ENCODE measurements at regions of chr1 and their contacts with region 1.

Region 1: GRCh38 chr1:244788493-244789275 is 46.8 kb upstream of the COX20 start:
- DNase-seq: no peak
- H3K4me3 ChIP-seq: no peak overlapping the region
- H3K27ac ChIP-seq: no peak overlapping the region
- H3K4me1 ChIP-seq: no peaks in the 10 kb centered on the region
- H3K27me3 ChIP-seq: no peaks in the 10 kb centered on the region
- CTCF ChIP-seq: no peak
- EP300 ChIP-seq: no peak
- POLR2A ChIP-seq: no peak

Region 2: GRCh38 chr1:244552340-244552739 is 236.3 kb before region 1 on chr1:
- in situ Hi-C with region 1: no loop called
- intact Hi-C with region 1: no loop called
- DNase-seq: no peak
- H3K4me3 ChIP-seq: no peak overlapping the region
- H3K27ac ChIP-seq: no peak overlapping the region
- H3K4me1 ChIP-seq: no peaks in the 10 kb centered on the region
- H3K27me3 ChIP-seq: no peaks in the 10 kb centered on the region
- CTCF ChIP-seq: no peak
- EP300 ChIP-seq: no peak
- POLR2A ChIP-seq: no peak

Region 3: DNA sequence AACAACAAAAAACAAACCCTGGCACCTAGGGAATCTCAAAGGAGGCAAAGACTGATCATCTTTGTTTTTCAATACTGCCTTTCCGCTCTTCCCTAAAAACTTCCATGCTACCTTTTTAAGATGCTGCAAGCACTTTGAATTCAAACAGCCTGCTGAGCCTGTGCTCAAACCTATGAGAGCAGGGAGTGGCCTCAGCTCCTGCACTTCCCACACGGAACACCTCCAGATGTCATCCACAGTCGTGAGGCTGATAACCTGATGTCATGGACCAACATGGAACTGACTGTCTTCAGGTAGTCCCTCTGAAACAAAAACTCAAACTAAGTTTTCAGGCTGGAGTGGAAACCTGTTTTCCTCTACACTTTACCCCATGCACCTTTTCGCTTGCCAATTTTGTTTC is 88.9 kb before region 1 on chr1:
- in situ Hi-C with region 1: no loop called
- intact Hi-C with region 1: loop called (anchors 5 kb)
- DNase-seq: no peak
- H3K4me3 ChIP-seq: no peak overlapping the region
- H3K27ac ChIP-seq: no peak overlapping the region
- H3K4me1 ChIP-seq: no peaks in the 10 kb centered on the region
- H3K27me3 ChIP-seq: no peaks in the 10 kb centered on the region
- CTCF ChIP-seq: no peak
- EP300 ChIP-seq: no peak
- POLR2A ChIP-seq: no peak